ENCODE measurements at regions of chr2 and their contacts with region 1.

Region 1: DNA sequence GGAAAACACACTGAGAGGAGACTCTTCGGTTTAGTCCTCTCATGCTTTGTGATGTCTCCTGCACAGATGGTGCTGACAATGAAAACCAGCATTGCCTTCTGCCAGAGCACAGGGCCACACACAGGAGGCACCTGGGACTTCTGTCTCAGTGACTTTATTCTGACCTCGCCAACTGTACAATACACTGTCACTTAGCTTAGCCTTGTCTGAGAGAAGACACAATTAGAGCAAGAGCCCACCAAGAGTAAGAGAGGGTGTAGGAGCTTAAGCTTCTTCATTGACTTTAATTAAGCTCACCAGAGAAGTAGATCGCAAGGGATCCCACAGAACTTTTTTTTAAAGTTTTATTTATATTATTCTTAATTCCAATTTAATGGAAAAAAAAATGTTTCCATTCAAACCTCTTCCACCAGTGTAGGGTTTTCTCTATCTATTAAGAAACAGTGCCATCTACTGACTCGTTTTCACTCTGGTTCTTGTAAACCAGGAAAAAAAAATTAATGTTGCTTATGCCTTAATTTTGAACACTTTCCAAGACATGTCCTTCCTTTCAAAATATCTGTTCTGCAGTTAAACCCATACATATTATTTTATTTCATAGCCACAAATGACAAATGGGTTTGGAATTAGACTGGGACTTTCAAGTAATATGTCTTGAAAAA is 42.4 kb upstream of the DDX18 start:
- DNase-seq: peak in 1 of 2 donors; percentile 75
- H3K4me3 ChIP-seq: no peak overlapping the region
- H3K27ac ChIP-seq: no peak overlapping the region
- H3K4me1 ChIP-seq: no peaks in the 10 kb centered on the region
- H3K27me3 ChIP-seq: no peaks in the 10 kb centered on the region
- CTCF ChIP-seq: peak in 3 of 7 experiments; percentile 37 to 44 (median 39)
- EP300 ChIP-seq: no peak
- POLR2A ChIP-seq: no peak

Region 2: GRCh38 chr2:117470311-117471095 is 301.6 kb before region 1 on chr2:
- intact Hi-C with region 1: loop called (anchors 10 kb)
- DNase-seq: peak; percentile 51 to 76
- H3K4me3 ChIP-seq: no peak overlapping the region
- H3K27ac ChIP-seq: no peak overlapping the region
- H3K4me1 ChIP-seq: no peaks in the 10 kb centered on the region
- H3K27me3 ChIP-seq: no peaks in the 10 kb centered on the region
- CTCF ChIP-seq: peak in 5 of 7 experiments; percentile 29 to 74 (median 58)
- EP300 ChIP-seq: no peak
- POLR2A ChIP-seq: no peak